CD8-positive, alpha-beta memory T cell (primary cell): ENCODE measurements at regions of chr19 and their contacts with region 1.

Region 1: GRCh38 chr19:36128392-36128736 is 11.5 kb upstream of the CAPNS1 start:
- DNase-seq: no peak
- H3K4me3 ChIP-seq: peak overlapping the region; percentile 69
- H3K4me3 Mint-ChIP-seq: peak overlapping the region; percentile 90 to 97 (median 94)
- H3K27ac ChIP-seq: peak overlapping the region; percentile 45
- H3K27ac Mint-ChIP-seq: peak overlapping the region; percentile 83 to 95 (median 92)
- H3K4me1 ChIP-seq: peaks cover 10% of the 10 kb centered on the region
- H3K4me1 Mint-ChIP-seq: peaks cover 22 to 26% (median 24%) of the 10 kb centered on the region in 3 donors
- H3K27me3 ChIP-seq: no peaks in the 10 kb centered on the region
- H3K27me3 Mint-ChIP-seq: no peaks in the 10 kb centered on the region

Region 2: DNA sequence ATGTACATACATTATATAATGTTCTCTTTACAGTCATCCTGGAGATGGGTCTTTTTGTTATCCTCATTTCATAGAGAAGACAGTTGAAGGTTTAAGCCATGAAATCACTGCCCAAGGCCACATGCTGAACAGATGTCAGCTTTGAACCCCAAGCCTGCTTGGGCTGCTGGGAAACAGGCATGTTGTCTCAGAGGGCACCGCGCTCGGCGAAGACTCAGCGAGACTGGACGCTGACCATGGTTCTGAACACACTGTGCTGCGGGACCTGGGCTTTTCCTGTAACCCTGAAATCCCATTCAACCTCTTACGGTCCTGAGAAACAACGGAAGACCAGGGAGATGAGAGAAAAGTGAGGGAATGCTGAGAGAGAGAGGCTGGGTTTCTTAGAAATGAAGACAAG is 164.8 kb before region 1 on chr19:
- CTCF ChIA-PET with region 1: interaction called, 10 read pairs
- POLR2A ChIA-PET with region 1: no interaction called
- DNase-seq: no peak
- H3K4me3 ChIP-seq: no peak overlapping the region
- H3K4me3 Mint-ChIP-seq: no peak overlapping the region
- H3K27ac ChIP-seq: no peak overlapping the region
- H3K27ac Mint-ChIP-seq: no peak overlapping the region
- H3K4me1 ChIP-seq: peaks cover 15% of the 10 kb centered on the region
- H3K4me1 Mint-ChIP-seq: peaks cover 20 to 33% (median 21%) of the 10 kb centered on the region in 3 donors
- H3K27me3 ChIP-seq: no peaks in the 10 kb centered on the region
- H3K27me3 Mint-ChIP-seq: peaks cover 4% of the 10 kb centered on the region in 2 donors

Region 3: GRCh38 chr19:36114763-36115452 is 13.5 kb before region 1 on chr19 and contains the start of gene POLR2I:
- CTCF ChIA-PET with region 1: interaction called, 22 read pairs
- POLR2A ChIA-PET with region 1: interaction called, 10 read pairs
- DNase-seq: peak; percentile 97 to 100 (median 99)
- H3K4me3 ChIP-seq: peak within 1 kb of the TSS; percentile 99
- H3K4me3 Mint-ChIP-seq: peak within 1 kb of the TSS; percentile 82 to 94 (median 90)
- H3K27ac ChIP-seq: peak within 1 kb of the TSS; percentile 95
- H3K27ac Mint-ChIP-seq: peak within 1 kb of the TSS; percentile 91 to 99 (median 97)
- H3K4me1 ChIP-seq: peaks cover 29% of the 10 kb centered on the region
- H3K4me1 Mint-ChIP-seq: peaks cover 34 to 55% (median 48%) of the 10 kb centered on the region in 3 donors
- H3K27me3 ChIP-seq: no peaks in the 10 kb centered on the region
- H3K27me3 Mint-ChIP-seq: peaks cover 0 to 7% of the 10 kb centered on the region in 2 donors
- total RNA-seq, gene POLR2I: 118 to 131 TPM

Region 4: DNA sequence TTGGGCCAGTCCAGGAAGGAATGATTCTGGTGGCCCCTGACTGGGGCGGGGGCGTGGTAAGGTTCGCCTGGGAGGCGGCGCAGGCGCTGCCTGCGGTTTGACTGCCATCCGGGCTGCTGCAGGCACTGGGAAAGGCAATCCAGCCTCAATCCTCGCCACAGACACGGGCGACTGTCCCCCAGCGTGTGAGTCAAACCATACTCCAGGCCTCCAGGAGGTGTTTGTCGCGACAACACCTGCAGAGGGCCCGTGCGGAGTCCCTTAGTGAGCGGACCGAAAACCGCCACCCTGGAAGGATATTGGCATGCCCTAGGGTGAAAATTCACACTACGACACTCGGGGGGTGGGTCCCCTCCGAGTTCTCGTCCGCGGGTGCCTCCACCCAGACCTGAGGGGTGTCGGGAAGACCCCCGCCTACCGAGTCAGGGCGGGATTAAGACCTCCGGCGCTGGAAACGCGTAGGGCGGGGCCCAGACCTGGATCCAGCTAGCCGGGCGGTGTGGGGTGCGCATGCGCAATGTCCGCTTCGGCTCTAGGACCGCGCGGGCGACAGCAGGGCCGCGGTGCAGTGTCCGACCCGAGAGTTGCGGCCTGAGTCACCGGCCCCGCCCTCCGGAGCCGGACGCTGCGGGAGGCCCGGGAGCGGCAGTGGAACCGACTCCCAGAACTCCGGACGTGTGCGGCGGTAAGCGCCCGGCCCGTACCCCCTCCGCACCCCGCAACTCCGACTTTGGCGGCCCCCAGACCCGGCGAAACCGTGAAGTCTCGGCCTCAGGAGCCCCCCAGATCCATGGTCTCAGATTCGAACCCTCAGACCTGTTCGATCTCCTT is 11.3 kb after region 1 on chr19 and contains the start of gene CAPNS1:
- CTCF ChIA-PET with region 1: interaction called, 36 read pairs
- POLR2A ChIA-PET with region 1: interaction called, 5 read pairs
- DNase-seq: peak; percentile 87 to 95 (median 89)
- H3K4me3 ChIP-seq: peak within 1 kb of the TSS; percentile 98
- H3K4me3 Mint-ChIP-seq: peak within 1 kb of the TSS; percentile 94 to 98 (median 96)
- H3K27ac ChIP-seq: peak within 1 kb of the TSS; percentile 91
- H3K27ac Mint-ChIP-seq: peak within 1 kb of the TSS; percentile 22 to 98 (median 92)
- H3K4me1 ChIP-seq: peaks cover 9% of the 10 kb centered on the region
- H3K4me1 Mint-ChIP-seq: peaks cover 15 to 23% (median 23%) of the 10 kb centered on the region in 3 donors
- H3K27me3 ChIP-seq: no peaks in the 10 kb centered on the region
- H3K27me3 Mint-ChIP-seq: no peaks in the 10 kb centered on the region
- total RNA-seq, gene CAPNS1: 415 to 432 TPM

Region 5: GRCh38 chr19:36151144-36152018 is 23.0 kb after region 1 on chr19:
- CTCF ChIA-PET with region 1: interaction called, 36 read pairs
- POLR2A ChIA-PET with region 1: interaction called, 4 read pairs
- DNase-seq: no peak
- H3K4me3 ChIP-seq: no peak overlapping the region
- H3K4me3 Mint-ChIP-seq: no peak overlapping the region
- H3K27ac ChIP-seq: no peak overlapping the region
- H3K27ac Mint-ChIP-seq: no peak overlapping the region
- H3K4me1 ChIP-seq: no peaks in the 10 kb centered on the region
- H3K4me1 Mint-ChIP-seq: peaks cover 2 to 9% (median 6%) of the 10 kb centered on the region in 3 donors
- H3K27me3 ChIP-seq: no peaks in the 10 kb centered on the region
- H3K27me3 Mint-ChIP-seq: no peaks in the 10 kb centered on the region

Region 6: DNA sequence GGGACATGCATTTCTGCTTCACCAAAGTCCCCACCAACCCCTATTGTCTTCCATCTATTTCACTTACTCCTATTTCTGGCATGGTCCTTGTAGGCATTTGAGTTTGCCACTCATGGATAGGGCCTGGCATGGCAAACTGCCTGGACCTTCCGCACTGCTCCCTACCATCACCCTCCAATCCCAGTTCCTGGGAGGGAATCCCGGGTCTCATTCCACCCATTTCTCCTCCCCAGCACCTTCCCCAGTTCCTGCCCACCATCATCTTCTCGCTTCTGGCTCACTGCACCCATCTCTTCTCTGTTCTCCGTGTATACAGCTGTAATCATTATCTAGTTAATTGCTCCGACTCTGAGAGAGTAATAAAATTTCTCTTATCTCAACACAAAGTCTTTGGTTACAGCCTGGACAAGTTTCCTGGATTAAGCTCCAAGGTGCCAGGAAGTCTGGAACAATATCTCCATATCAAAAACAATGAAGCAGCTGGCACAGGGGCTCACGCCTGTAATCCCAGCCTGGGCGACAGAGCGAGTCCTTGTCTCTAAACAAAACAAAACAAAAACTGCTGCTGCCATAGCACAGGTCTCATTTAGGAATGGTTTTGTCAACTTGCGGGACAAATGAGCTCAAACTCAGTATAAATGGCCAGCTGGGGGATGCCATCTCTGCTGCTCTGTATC is 40.9 kb after region 1 on chr19:
- CTCF ChIA-PET with region 1: interaction called, 165 read pairs
- POLR2A ChIA-PET with region 1: no interaction called
- DNase-seq: no peak
- H3K4me3 ChIP-seq: no peak overlapping the region
- H3K4me3 Mint-ChIP-seq: no peak overlapping the region
- H3K27ac ChIP-seq: no peak overlapping the region
- H3K27ac Mint-ChIP-seq: peak overlapping the region in 3 of 8 donors; percentile 11 to 87 (median 35)
- H3K4me1 ChIP-seq: no peaks in the 10 kb centered on the region
- H3K4me1 Mint-ChIP-seq: peaks cover 3 to 4% (median 4%) of the 10 kb centered on the region in 3 donors
- H3K27me3 ChIP-seq: no peaks in the 10 kb centered on the region
- H3K27me3 Mint-ChIP-seq: no peaks in the 10 kb centered on the region